GM10248 (cell line): ENCODE measurements at regions of chr12 and their contacts with region 1.

Region 1: DNA sequence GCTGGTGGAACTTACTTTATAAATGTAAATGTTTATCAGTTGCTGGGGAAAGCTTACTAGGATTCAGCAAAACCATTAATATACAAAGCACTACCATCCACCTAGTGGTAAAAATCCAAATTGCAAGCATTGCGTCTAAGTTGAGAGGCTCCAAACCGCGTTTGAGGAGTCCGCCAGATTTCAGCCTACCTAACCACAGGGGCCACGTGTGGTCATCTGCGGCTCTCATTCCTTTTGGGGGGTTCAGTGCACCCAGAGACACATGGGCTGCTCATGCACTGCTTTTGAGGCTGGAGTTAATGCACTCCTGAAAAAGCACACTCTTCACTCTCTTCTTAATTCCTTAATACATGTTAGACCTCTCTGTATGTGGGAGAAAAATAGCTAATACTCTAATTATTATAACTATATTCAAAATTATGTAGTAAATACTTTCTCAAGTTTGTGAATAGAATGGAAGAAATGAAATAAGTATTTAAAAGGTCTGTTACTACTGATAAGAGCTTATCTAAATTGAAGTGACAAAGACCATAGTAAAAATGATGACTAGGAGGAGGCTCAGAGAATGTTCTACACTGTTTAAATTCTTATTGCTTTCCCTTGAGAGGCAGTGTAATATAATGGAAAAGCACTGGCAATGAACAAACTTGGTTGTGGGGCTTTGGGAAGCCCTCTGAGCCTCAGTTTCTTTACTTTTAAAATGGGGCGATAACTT is 41.4 kb upstream of the MANSC4 start:
- DNase-seq: peak; percentile 47
- CTCF ChIP-seq: peak; percentile 70

Region 2: GRCh38 chr12:26953447-26953846 is 868.0 kb before region 1 on chr12:
- CTCF ChIA-PET with region 1: no interaction called
- POLR2A ChIA-PET with region 1: interaction called, 11 read pairs
- DNase-seq: no peak
- CTCF ChIP-seq: no peak

Region 3: DNA sequence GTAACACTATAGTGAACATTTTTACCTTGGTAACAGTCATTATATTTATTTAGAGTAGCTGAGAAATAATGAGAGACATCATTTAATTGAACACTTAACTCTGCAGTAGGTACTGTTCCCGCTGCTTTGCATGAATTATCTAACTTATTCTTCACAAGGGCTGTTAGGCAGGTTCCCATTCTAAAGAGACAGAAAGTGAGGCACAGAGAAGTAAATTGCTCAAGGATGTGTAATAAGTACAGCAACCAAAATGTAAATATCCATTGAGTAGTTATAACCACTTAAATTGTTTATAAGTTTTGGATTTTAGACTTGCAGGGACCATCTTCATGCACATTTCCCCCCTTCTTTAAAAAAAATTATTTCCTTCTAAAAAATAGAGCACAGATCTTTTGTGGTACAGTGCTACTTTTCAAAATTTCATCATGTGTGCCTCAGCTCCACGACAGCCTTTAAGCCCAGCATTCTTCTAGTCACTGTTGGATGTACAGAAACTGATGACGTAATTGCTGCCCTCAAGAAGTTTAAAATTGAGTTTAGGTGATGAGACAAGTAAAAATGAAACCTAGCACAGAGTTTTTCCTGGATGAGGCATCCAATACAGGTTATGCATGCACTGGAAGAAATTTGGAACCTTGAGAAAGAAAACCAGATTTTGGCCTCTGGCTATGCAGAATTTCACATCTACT is 35.4 kb before region 1 on chr12:
- CTCF ChIA-PET with region 1: interaction called, 30 read pairs
- POLR2A ChIA-PET with region 1: no interaction called
- DNase-seq: no peak
- CTCF ChIP-seq: no peak

Region 4: GRCh38 chr12:27805238-27805637 is 16.2 kb before region 1 on chr12:
- CTCF ChIA-PET with region 1: interaction called, 39 read pairs
- POLR2A ChIA-PET with region 1: no interaction called
- DNase-seq: no peak
- CTCF ChIP-seq: no peak

Region 5: GRCh38 chr12:27838543-27839185 is 17.2 kb after region 1 on chr12:
- CTCF ChIA-PET with region 1: interaction called, 27 read pairs
- POLR2A ChIA-PET with region 1: no interaction called
- DNase-seq: no peak
- CTCF ChIP-seq: no peak

Region 6: DNA sequence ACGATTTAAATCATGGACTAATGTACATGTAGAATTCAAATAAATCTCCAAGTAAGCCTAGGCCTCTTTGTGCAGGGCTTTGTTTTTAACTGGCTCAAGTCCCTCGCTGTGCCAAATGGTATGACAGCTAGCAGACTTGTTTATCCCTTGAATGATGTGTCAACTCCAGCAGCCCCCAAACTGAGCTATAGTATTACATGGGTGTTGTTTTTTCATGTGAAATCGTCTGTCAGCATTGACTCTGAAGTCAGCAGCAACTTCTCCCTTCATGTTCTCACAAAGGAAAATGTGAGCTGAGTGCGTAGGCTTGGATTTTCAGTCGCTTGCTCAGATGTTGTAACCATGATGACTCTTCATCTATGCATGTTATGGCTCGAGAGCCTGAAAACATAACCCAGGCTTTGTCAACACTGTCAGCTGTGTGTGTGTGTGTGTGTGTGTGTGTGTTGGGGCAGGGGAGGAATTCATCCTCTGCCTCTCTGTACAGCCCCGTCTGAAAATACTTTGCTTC is 77.8 kb after region 1 on chr12:
- CTCF ChIA-PET with region 1: interaction called, 12 read pairs
- POLR2A ChIA-PET with region 1: no interaction called
- DNase-seq: no peak
- CTCF ChIP-seq: no peak